ENCODE measurements at regions of chr1 and their contacts with region 1.

Region 1: DNA sequence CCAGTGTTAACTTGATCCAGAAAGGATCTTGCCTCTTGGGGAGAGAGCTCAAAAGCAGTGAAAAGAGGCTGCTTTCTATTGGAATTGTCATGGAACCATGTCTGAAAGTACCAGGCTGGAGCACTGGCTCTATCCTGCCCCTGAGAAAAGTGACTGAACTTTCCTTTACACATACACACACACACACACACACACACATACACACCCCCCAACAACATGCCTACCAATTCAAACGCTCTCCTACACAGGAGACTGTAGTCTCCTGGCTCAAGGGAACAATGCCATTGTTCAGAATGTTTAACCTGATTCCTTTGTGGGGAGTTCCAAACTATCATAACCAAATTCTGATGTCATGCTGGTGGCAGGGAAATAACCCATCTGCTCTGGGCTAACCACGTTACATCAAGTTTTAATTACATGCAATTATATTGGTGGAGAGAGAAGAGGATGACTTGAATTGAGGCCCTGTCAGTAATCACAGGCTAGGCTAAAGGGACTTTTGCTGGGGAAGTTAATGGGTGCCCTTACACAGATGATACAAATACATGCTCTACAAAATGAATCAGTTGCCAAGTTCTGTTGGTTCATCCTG is 52.3 kb upstream of the DUSP10 start:
- DNase-seq: peak; percentile 73
- H3K4me3 Mint-ChIP-seq: peak overlapping the region; percentile 17
- H3K27ac Mint-ChIP-seq: peak overlapping the region; percentile 88
- H3K4me1 Mint-ChIP-seq: peaks cover 40% of the 10 kb centered on the region
- H3K27me3 Mint-ChIP-seq: no peaks in the 10 kb centered on the region

Region 2: GRCh38 chr1:220879076-220879508 is 915.1 kb before region 1 on chr1 and contains the start of gene HLX:
- CTCF ChIA-PET with region 1: no interaction called
- intact Hi-C with region 1: no loop called
- DNase-seq: peak; percentile 31
- H3K4me3 Mint-ChIP-seq: peak within 1 kb of the TSS; percentile 63
- H3K27ac Mint-ChIP-seq: no peak within 1 kb of the TSS
- H3K4me1 Mint-ChIP-seq: peaks cover 37% of the 10 kb centered on the region
- H3K27me3 Mint-ChIP-seq: peaks cover 73% of the 10 kb centered on the region
- total RNA-seq, gene HLX: 0.12 TPM in 1 of 2 experiments, not detected in the other

Region 3: GRCh38 chr1:221725735-221726672 is 68.2 kb before region 1 on chr1:
- CTCF ChIA-PET with region 1: no interaction called
- intact Hi-C with region 1: loop called (anchors 1 kb)
- DNase-seq: no peak
- H3K4me3 Mint-ChIP-seq: peak overlapping the region; percentile 69
- H3K27ac Mint-ChIP-seq: peak overlapping the region; percentile 99
- H3K4me1 Mint-ChIP-seq: peaks cover 67% of the 10 kb centered on the region
- H3K27me3 Mint-ChIP-seq: no peaks in the 10 kb centered on the region

Region 4: GRCh38 chr1:221777431-221778072 is 16.6 kb before region 1 on chr1:
- CTCF ChIA-PET with region 1: interaction called, 10 read pairs
- intact Hi-C with region 1: loop called (anchors 1 kb)
- DNase-seq: peak; percentile 79
- H3K4me3 Mint-ChIP-seq: peak overlapping the region; percentile 49
- H3K27ac Mint-ChIP-seq: peak overlapping the region; percentile 89
- H3K4me1 Mint-ChIP-seq: peaks cover 74% of the 10 kb centered on the region
- H3K27me3 Mint-ChIP-seq: no peaks in the 10 kb centered on the region

Region 5: GRCh38 chr1:221809031-221810029 is 15.2 kb after region 1 on chr1:
- CTCF ChIA-PET with region 1: no interaction called
- intact Hi-C with region 1: loop called (anchors 2 kb)
- DNase-seq: no peak
- H3K4me3 Mint-ChIP-seq: no peak overlapping the region
- H3K27ac Mint-ChIP-seq: peak overlapping the region; percentile 12
- H3K4me1 Mint-ChIP-seq: peaks cover 44% of the 10 kb centered on the region
- H3K27me3 Mint-ChIP-seq: no peaks in the 10 kb centered on the region

Region 6: DNA sequence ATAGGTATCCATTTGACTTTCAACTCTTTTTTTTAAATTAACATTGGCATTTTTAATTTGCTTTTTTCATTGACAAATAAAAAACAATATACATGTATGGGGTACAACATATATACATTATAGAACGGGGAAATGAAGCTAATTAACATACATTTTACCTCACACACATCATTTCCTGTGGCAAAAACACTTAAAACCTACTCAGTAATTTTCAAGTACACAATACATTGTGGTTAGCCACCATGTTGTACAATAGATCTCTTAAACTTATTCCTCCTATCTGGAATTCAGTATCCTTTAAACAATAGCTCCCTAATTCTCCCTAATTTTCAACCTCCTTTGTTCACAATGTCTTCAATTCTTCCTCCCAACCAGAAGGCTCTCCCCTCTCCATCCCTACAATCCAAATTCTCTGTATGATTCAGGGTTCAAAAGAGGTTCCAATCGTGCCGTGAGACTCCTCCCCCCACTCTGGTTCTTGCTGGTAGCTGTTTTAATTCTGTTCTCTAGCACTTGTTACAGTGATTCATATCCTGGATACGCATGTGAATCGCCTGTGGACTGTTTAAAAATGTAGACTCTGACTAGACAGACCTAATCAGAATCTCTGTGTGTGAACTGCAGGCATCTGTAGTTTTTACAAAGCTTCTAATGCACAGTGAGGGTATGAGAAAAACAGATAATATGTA is 35.3 kb after region 1 on chr1:
- CTCF ChIA-PET with region 1: no interaction called
- intact Hi-C with region 1: loop called (anchors 1 kb)
- DNase-seq: peak; percentile 83
- H3K4me3 Mint-ChIP-seq: peak overlapping the region; percentile 14
- H3K27ac Mint-ChIP-seq: peak overlapping the region; percentile 83
- H3K4me1 Mint-ChIP-seq: peaks cover 45% of the 10 kb centered on the region
- H3K27me3 Mint-ChIP-seq: no peaks in the 10 kb centered on the region

Region 7: GRCh38 chr1:221994274-221994698 is 200.1 kb after region 1 on chr1:
- CTCF ChIA-PET with region 1: no interaction called
- intact Hi-C with region 1: loop called (anchors 1 kb)
- DNase-seq: peak; percentile 55
- H3K4me3 Mint-ChIP-seq: no peak overlapping the region
- H3K27ac Mint-ChIP-seq: peak overlapping the region; percentile 94
- H3K4me1 Mint-ChIP-seq: peaks cover 33% of the 10 kb centered on the region
- H3K27me3 Mint-ChIP-seq: no peaks in the 10 kb centered on the region

Region 8: DNA sequence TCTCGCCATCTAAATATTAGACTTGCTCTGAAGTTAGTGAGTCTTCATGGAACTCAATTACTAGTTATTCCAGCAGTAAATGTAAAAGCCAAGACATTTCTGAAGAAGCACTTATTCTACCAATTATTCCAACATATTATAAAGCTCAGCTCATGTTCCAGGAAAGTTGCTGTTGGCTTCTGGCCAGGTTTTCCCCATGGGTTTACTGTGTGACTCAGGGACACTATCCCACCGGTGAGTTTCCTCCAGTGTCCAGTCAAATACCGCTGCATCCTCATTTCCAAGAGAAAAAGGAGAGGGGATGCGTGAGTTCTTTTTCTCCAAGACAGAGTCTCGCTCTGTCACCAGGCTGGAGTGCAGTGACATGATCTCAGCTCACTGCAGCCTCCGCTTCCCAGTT is 763.0 kb after region 1 on chr1:
- CTCF ChIA-PET with region 1: no interaction called
- intact Hi-C with region 1: no loop called
- DNase-seq: no peak
- H3K4me3 Mint-ChIP-seq: no peak overlapping the region
- H3K27ac Mint-ChIP-seq: no peak overlapping the region
- H3K4me1 Mint-ChIP-seq: peaks cover 2% of the 10 kb centered on the region
- H3K27me3 Mint-ChIP-seq: no peaks in the 10 kb centered on the region

Measured in activated naive CD4-positive, alpha-beta T cell treated with anti-CD3 and anti-CD28 coated beads for 36 hours (primary cell).